Activated CD4-positive, alpha-beta T cell treated with anti-CD3 and anti-CD28 coated beads for 36 hours (primary cell): ENCODE measurements at regions of chr11 and their contacts with region 1.

Region 1: DNA sequence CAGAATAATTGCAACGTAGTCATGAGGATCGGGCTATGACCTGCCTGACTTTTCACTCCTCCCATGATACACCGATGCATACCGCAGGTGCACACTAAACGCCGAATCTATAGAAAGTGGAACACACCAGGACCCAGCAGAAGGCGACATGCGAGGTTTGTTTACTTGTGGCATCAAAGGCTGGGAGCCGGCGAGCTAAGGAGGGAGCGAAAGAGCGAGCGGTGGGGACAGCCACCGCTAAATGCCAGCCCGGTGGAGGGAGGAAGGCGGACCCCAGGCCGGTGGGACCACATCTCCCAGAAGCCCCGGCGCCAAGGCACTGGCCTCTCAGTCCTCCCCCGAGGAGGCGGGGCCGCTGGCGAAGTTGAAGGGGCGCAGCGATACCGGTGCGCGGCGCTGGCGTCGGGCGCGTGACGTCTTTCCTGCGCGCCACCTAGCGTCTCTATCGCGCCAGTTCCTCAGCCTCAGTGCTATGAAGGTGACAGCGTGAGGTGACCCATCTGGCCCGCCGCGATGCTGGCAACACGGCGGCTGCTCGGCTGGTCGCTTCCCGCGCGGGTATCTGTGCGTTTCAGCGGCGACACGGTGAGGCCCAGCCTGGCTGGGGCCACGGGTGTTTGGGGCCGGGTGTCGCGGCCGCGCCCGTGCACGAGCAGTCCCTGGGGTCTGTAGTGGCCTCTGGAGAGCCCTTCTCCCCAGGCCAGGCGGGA is at the start of gene NDUFV1:
- DNase-seq: peak; percentile 98
- ATAC-seq: peak; percentile 100
- H3K4me3 Mint-ChIP-seq: peak within 1 kb of the TSS; percentile 92
- H3K27ac Mint-ChIP-seq: peak within 1 kb of the TSS; percentile 90
- H3K4me1 Mint-ChIP-seq: peaks cover 16% of the 10 kb centered on the region
- H3K27me3 Mint-ChIP-seq: peaks cover 9% of the 10 kb centered on the region
- total RNA-seq, gene NDUFV1: 253 to 287 TPM

Region 2: GRCh38 chr11:67420646-67421420 is 185.8 kb before region 1 on chr11:
- CTCF ChIA-PET with region 1: no interaction called
- POLR2A ChIA-PET with region 1: no interaction called
- intact Hi-C with region 1: no loop called
- DNase-seq: peak; percentile 99
- ATAC-seq: peak; percentile 92
- H3K4me3 Mint-ChIP-seq: peak overlapping the region; percentile 76
- H3K27ac Mint-ChIP-seq: peak overlapping the region; percentile 84
- H3K4me1 Mint-ChIP-seq: peaks cover 49% of the 10 kb centered on the region
- H3K27me3 Mint-ChIP-seq: no peaks in the 10 kb centered on the region

Region 3: DNA sequence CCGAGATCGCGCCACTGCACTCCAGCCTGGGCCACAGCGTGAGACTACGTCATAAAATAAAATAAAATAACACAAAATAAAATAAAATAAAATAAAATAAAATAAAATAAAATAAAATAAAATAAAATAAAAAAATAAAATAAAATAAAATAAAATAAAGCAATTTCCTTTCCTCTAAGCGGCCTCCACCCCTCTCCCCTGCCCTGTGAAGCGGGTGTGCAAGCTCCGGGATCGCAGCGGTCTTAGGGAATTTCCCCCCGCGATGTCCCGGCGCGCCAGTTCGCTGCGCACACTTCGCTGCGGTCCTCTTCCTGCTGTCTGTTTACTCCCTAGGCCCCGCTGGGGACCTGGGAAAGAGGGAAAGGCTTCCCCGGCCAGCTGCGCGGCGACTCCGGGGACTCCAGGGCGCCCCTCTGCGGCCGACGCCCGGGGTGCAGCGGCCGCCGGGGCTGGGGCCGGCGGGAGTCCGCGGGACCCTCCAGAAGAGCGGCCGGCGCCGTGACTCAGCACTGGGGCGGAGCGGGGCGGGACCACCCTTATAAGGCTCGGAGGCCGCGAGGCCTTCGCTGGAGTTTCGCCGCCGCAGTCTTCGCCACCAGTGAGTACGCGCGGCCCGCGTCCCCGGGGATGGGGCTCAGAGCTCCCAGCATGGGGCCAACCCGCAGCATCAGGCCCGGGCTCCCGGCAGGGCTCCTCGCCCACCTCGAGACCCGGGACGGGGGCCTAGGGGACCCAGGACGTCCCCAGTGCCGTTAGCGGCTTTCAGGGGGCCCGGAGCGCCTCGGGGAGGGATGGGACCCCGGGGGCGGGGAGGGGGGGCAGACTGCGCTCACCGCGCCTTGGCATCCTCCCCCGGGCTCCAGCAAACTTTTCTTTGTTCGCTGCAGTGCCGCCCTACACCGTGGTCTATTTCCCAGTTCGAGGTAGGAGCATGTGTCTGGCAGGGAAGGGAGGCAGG is 23.1 kb before region 1 on chr11 and contains the start of gene GSTP1:
- CTCF ChIA-PET with region 1: interaction called, 4 read pairs
- POLR2A ChIA-PET with region 1: no interaction called
- intact Hi-C with region 1: loop called (anchors 1 kb)
- DNase-seq: peak; percentile 90
- ATAC-seq: peak; percentile 85
- H3K4me3 Mint-ChIP-seq: peak within 1 kb of the TSS; percentile 89
- H3K27ac Mint-ChIP-seq: peak within 1 kb of the TSS; percentile 94
- H3K4me1 Mint-ChIP-seq: peaks cover 52% of the 10 kb centered on the region
- H3K27me3 Mint-ChIP-seq: peaks cover 10% of the 10 kb centered on the region
- total RNA-seq, gene GSTP1: 376 to 463 TPM